Posterior vena cava (tissue), 2 donors: ENCODE measurements at regions of chr17 and their contacts with region 1.

Region 1: DNA sequence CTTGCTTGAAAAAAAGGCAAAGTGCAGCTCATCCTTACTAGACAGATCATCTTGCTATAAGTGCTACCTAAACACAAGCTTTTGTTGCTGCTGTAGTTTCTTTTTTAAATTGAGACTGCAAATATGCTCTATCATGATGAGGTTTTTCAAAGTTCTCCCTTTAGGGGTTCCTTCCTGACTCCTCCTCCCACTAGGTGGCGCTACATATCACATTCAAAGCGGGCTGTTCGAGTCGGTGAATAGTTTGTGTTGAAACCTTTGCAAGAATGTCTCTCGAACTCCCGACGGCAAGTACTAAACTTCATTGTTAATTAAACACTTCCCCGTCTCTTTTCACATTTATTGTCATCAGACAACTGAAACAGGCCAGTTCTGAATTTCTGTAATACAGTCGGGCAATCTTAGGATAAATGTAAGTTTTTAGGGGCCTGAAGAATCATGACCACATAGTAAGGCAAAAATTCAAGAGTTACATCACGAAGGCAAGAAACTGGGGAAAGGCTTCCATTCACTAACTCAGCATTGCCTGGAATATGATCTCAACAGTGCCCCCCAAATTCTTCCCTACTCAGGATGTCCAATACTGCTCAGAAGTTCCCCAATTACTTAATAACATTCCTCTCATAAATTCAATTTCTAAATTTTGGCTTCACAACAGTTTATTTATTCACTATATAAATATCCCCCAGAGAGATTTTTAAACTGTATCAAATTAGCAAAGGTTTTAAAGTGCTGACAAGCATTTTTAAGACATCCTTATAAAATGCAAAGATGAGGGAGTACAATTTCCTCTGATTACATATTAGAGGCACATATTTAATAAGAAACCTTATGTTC is 6.7 kb downstream of the HS3ST3A1 start:
- DNase-seq: no peak

Region 2: DNA sequence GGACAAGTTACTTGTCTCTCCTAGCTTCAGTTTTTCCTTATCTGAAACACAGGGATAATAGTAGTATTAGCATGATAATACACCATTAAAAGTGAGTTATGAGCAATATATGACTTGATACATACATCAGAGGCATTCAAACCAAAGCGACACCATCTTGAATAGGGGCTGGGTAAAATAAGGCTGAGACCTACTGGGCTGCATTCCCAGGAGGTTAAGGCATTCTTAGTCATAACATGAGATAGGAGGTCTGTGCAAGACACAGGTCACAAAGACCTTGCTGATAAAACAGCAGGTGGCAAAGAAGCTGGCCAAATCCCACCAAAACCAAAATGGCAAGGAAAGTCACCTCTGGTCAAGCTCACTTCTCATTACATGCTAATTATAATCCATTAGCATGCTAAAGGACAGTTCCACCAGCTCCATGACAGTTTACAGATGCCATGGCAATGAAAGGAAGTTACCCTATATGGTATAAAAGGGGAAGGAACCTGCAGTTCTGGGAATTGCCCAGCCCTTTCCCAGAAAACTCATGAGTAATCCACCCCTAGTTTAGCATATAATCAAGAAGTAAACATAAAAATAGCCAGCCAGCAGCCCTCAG is 44.0 kb after region 1 on chr17:
- intact Hi-C with region 1: no loop called
- DNase-seq: no peak

Region 3: DNA sequence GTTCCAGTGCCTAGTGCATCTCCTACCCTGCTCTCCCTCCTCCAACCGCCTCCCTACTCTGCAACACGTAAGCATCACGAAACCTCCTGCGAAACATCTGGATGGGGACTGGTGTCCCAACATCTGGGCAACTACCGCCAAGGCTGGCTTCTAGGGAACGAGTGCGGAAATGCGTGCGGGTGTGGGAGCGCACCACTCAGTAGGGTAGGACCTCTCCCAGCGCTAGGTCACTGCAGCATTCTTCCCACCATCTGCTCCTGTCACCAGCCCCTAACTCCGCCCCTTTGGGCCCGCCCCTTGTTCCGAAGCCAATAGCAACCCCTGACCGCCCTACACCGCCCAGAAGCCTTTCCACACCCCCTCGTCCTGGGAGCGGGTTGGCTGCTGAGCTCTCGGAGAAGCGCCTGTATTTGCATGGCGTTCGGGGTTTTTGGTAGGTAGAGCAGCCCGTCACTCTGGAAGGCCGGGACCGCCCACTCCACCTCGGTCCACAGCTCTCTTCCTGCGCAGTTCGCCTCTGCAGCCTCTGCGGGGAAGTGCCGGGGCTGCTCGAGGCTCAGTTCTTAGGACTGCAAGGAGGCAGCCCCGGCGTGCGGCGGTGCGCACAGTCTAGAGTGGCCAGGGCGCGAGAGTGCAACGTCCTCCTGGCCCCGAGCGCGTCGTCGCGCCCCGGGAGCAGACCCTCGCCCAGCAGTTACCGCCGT is 705.7 kb after region 1 on chr17 and contains the start of gene HS3ST3B1:
- intact Hi-C with region 1: loop called (anchors 5 to 10 kb)
- DNase-seq: peak; percentile 98
- total RNA-seq, gene HS3ST3B1: 0.62 to 0.97 TPM

Region 4: DNA sequence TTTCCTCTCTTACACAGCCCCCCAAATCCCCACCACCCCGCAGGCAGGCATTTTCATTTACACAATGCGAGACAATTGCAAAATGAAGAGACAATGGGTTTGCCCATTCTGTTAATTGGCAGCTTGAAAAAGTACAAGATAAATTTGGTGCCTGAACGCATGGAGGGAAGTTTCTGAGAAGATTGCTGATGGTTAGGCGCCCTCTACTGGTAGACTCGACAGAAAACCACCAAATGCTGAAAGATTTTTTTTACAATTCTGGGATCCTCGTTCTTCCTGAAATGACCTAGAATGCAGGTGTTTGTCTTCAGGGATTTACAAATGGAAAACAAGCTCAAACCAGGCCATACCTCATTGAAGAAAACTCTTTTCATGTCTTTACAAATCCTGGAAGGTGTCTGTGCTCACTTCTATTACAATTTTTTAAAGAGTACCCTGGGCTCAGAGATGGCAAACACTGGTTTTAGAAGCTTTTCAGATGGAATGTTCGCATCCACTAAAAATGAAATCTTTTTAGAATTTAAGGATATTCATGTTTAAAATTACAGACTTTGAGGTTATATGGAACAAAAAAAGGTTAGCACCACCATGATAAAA is 1331.6 kb after region 1 on chr17:
- intact Hi-C with region 1: loop called in 1 of 2 experiments (anchors 10 kb)
- DNase-seq: no peak